ENCODE measurements at regions of chr12 and their contacts with region 1.

Region 1: GRCh38 chr12:132445884-132446632 is 43.9 kb upstream of the FBRSL1 start:
- DNase-seq: peak; percentile 61
- H3K4me3 Mint-ChIP-seq: peak overlapping the region; percentile 92
- H3K27ac Mint-ChIP-seq: peak overlapping the region; percentile 99
- H3K4me1 Mint-ChIP-seq: peaks cover 56% of the 10 kb centered on the region
- H3K27me3 Mint-ChIP-seq: no peaks in the 10 kb centered on the region

Region 2: DNA sequence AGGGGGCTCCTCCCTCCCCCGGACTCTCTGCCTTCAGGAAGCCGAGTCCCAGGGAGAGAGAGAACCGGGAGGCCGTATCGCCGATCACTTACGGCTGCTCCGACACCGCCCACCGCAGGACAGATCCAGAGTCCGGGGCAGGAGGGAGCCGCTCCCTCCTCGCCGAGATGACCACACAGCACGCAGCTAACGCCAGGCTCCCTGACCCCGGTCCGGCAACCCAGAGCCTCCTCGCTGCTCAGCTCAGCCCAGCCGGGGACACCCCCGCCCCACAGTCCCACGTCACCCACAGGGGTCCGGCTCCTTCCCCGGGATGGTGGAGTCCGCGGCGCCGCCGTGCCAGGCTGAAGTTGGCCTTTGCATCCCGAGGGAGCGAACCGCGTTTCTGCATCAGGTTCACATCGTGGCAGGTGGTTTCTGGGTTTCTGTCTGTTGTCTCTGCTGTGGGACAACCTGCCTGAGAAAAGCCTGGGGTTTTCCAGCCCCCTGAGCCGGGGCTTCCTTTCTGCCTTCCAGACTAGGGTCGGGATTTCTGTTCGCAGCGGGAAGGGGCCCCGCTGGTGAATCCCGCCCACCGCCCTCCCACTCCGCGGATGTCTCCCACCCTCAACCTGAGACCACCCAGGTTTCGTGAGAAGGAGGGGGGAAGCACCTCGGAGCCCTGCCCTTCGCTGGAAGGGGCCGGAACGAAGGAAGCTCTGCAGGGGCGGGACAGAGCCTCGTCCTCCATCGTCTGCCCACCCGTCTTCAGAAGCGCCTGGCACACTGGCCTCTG is 240.6 kb before region 1 on chr12:
- CTCF ChIA-PET with region 1: no interaction called
- intact Hi-C with region 1: no loop called
- DNase-seq: no peak
- H3K4me3 Mint-ChIP-seq: no peak overlapping the region
- H3K27ac Mint-ChIP-seq: no peak overlapping the region
- H3K4me1 Mint-ChIP-seq: peaks cover 8% of the 10 kb centered on the region
- H3K27me3 Mint-ChIP-seq: peaks cover 19% of the 10 kb centered on the region

Region 3: GRCh38 chr12:132469423-132469822 is 23.4 kb after region 1 on chr12:
- CTCF ChIA-PET with region 1: no interaction called
- intact Hi-C with region 1: loop called (anchors 2 kb)
- DNase-seq: no peak
- H3K4me3 Mint-ChIP-seq: peak overlapping the region; percentile 38
- H3K27ac Mint-ChIP-seq: no peak overlapping the region
- H3K4me1 Mint-ChIP-seq: peaks cover 32% of the 10 kb centered on the region
- H3K27me3 Mint-ChIP-seq: no peaks in the 10 kb centered on the region

Region 4: DNA sequence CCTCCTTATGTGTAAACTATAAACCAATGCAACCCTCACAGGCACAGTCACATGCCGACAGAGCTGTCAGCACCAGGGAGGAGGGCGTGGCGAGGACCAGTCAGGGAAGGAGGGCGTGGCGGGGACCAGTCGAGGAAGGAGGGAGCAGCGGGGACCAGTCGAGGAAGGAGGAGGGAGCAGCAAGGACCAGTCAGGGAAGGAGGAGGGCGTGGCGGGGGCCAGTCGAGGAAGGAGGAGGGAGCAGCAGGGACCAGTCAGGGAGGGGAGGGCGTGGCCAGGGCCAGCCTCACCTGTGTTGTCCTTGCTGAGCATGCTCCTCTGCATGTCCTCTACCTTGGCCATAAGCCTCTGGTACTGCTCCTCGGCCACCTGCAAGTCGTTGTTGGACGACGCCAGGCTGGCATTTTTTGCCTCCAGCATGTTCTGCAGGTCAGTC is 358.4 kb after region 1 on chr12:
- CTCF ChIA-PET with region 1: no interaction called
- intact Hi-C with region 1: no loop called
- DNase-seq: no peak
- H3K4me3 Mint-ChIP-seq: no peak overlapping the region
- H3K27ac Mint-ChIP-seq: no peak overlapping the region
- H3K4me1 Mint-ChIP-seq: peaks cover 22% of the 10 kb centered on the region
- H3K27me3 Mint-ChIP-seq: no peaks in the 10 kb centered on the region

Measured in activated naive CD4-positive, alpha-beta T cell treated with anti-CD3 and anti-CD28 coated beads for 36 hours (primary cell).